B cell (primary cell): ENCODE measurements at regions of chr1 and their contacts with region 1.

Region 1: GRCh38 chr1:37989361-37989930 is 376 bp downstream of the SF3A3 start:
- DNase-seq: no peak
- ATAC-seq: no peak
- H3K4me3 ChIP-seq: peak overlapping the region; percentile 90 to 98 (median 96)
- H3K4me3 Mint-ChIP-seq: peak overlapping the region; percentile 99
- H3K27ac ChIP-seq: peak overlapping the region; percentile 53 to 85
- H3K27ac Mint-ChIP-seq: peak overlapping the region; percentile 98
- H3K4me1 ChIP-seq: peaks cover 7 to 15% of the 10 kb centered on the region in 2 donors
- H3K4me1 Mint-ChIP-seq: peaks cover 20% of the 10 kb centered on the region
- H3K27me3 ChIP-seq: no peaks in the 10 kb centered on the region
- H3K27me3 Mint-ChIP-seq: no peaks in the 10 kb centered on the region
- CTCF ChIP-seq: no peak

Region 2: GRCh38 chr1:37807555-37808368 is 181.7 kb before region 1 on chr1 and contains the starts of genes C1orf122 and YRDC:
- CTCF ChIA-PET with region 1: interaction called, 3 read pairs
- POLR2A ChIA-PET with region 1: no interaction called
- intact Hi-C with region 1: loop called (anchors 1 kb)
- DNase-seq: peak; percentile 91
- ATAC-seq: peak; percentile 90
- H3K4me3 ChIP-seq: peak within 1 kb of the TSS; percentile 78 to 88 (median 83)
- H3K4me3 Mint-ChIP-seq: peak within 1 kb of the TSS; percentile 98
- H3K27ac ChIP-seq: peak within 1 kb of the TSS; percentile 68 to 94
- H3K27ac Mint-ChIP-seq: peak within 1 kb of the TSS; percentile 98
- H3K4me1 ChIP-seq: peaks cover 14 to 31% of the 10 kb centered on the region in 2 donors
- H3K4me1 Mint-ChIP-seq: peaks cover 40% of the 10 kb centered on the region
- H3K27me3 ChIP-seq: no peaks in the 10 kb centered on the region
- H3K27me3 Mint-ChIP-seq: no peaks in the 10 kb centered on the region
- CTCF ChIP-seq: no peak
- total RNA-seq, gene C1orf122: 15.7 and 16.9 TPM in 2 replicates
- total RNA-seq, gene YRDC: 12.5 and 14.0 TPM in 2 replicates

Region 3: DNA sequence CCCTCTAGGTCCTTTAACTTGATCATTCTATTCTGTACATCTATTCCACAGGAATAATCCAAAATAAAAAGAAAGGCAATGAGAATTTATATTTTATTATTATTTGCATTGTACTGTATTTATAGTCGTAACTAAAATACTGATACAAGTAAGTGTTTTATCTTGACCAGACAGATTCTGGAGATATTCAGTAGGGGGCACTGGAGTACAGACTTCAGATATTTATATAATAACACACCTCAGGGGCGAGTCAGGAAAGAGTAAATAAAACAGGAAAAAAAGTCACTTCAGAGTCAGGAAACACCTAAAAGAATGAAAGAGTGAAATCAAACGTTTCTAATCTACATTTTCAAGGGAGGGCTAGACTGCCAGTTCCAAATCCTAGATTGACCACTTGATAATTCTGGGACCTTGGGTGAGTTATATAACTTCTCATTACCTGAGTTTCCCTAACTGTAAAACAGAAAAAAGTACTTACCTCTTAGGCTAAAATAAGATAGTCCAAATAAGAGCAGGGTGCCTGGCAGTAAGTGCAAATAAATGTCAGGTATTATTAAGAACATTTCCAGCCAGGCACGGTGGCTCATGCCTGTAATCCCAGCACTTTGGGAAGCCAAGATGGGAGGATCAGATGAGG is 99.0 kb before region 1 on chr1:
- CTCF ChIA-PET with region 1: interaction called, 4 read pairs
- POLR2A ChIA-PET with region 1: no interaction called
- intact Hi-C with region 1: loop called (anchors 1 kb)
- DNase-seq: peak; percentile 69
- ATAC-seq: peak; percentile 61
- H3K4me3 ChIP-seq: no peak overlapping the region
- H3K4me3 Mint-ChIP-seq: no peak overlapping the region
- H3K27ac ChIP-seq: peak overlapping the region in 1 of 2 donors; percentile 43
- H3K27ac Mint-ChIP-seq: peak overlapping the region; percentile 23
- H3K4me1 ChIP-seq: no peaks in the 10 kb centered on the region
- H3K4me1 Mint-ChIP-seq: peaks cover 2% of the 10 kb centered on the region
- H3K27me3 ChIP-seq: no peaks in the 10 kb centered on the region
- H3K27me3 Mint-ChIP-seq: no peaks in the 10 kb centered on the region
- CTCF ChIP-seq: peak; percentile 81

Region 4: DNA sequence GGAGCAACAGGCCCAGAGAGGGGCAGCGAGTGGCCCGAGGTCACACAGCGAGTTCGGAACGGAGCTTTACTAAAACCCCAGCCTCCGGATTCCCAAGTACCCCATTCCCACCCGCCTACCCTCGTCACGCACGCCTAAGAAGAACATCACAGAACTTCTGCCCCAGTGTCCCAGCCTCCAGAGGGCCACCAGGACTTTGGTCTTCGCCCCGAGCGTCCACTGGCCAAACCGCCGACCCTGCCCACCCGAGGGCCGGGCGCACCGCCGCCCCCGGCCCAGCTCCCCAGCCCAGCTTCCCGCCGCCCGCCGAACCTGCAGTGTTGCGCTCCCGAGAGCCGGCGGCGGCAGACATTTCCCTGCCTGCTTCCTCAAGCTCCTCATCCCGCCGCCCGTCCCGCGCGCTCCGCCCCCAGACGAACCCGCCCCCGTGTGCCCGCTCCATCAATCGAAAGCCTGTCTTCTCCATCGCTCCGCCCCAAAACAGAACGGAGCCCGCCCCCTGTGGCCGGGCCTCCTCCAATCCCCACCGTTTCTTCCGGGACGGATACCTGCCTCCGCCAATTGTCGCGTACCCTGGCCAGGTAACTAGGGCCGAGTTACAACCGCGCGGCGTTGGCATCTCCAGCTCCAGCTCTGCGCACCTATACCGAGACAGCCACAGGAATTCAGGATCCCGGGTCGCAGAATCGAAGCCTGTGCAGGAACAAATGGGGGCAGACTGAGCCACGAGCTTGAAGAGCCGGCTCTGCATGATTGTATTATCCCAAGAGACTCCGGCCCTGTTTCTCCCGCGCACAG is 57.9 kb before region 1 on chr1:
- CTCF ChIA-PET with region 1: no interaction called
- POLR2A ChIA-PET with region 1: interaction called, 5 read pairs
- intact Hi-C with region 1: loop called (anchors 1 kb)
- DNase-seq: peak; percentile 97
- ATAC-seq: peak; percentile 99
- H3K4me3 ChIP-seq: peak overlapping the region; percentile 69 to 98 (median 97)
- H3K4me3 Mint-ChIP-seq: peak overlapping the region; percentile 89
- H3K27ac ChIP-seq: peak overlapping the region in 1 of 2 donors; percentile 80
- H3K27ac Mint-ChIP-seq: peak overlapping the region; percentile 83
- H3K4me1 ChIP-seq: peaks cover 18 to 28% of the 10 kb centered on the region in 2 donors
- H3K4me1 Mint-ChIP-seq: peaks cover 42% of the 10 kb centered on the region
- H3K27me3 ChIP-seq: no peaks in the 10 kb centered on the region
- H3K27me3 Mint-ChIP-seq: no peaks in the 10 kb centered on the region
- CTCF ChIP-seq: no peak

Region 5: GRCh38 chr1:38012363-38013226 is 23.1 kb after region 1 on chr1 and contains the start of gene UTP11:
- CTCF ChIA-PET with region 1: interaction called, 26 read pairs
- POLR2A ChIA-PET with region 1: interaction called, 3 read pairs
- intact Hi-C with region 1: loop called (anchors 1 kb)
- DNase-seq: peak; percentile 95
- ATAC-seq: peak; percentile 97
- H3K4me3 ChIP-seq: peak within 1 kb of the TSS; percentile 72 to 93 (median 83)
- H3K4me3 Mint-ChIP-seq: peak within 1 kb of the TSS; percentile 97
- H3K27ac ChIP-seq: peak within 1 kb of the TSS; percentile 76 to 90
- H3K27ac Mint-ChIP-seq: peak within 1 kb of the TSS; percentile 91
- H3K4me1 ChIP-seq: peaks cover 13 to 20% of the 10 kb centered on the region in 2 donors
- H3K4me1 Mint-ChIP-seq: peaks cover 23% of the 10 kb centered on the region
- H3K27me3 ChIP-seq: no peaks in the 10 kb centered on the region
- H3K27me3 Mint-ChIP-seq: no peaks in the 10 kb centered on the region
- CTCF ChIP-seq: no peak
- total RNA-seq, gene UTP11: 16.4 and 16.8 TPM in 2 replicates

Region 6: GRCh38 chr1:38052750-38053410 is 63.4 kb after region 1 on chr1:
- CTCF ChIA-PET with region 1: no interaction called
- POLR2A ChIA-PET with region 1: no interaction called
- intact Hi-C with region 1: no loop called
- DNase-seq: peak; percentile 79
- ATAC-seq: peak; percentile 92
- H3K4me3 ChIP-seq: no peak overlapping the region
- H3K4me3 Mint-ChIP-seq: peak overlapping the region; percentile 14
- H3K27ac ChIP-seq: no peak overlapping the region
- H3K27ac Mint-ChIP-seq: no peak overlapping the region
- H3K4me1 ChIP-seq: peaks cover 13 to 20% of the 10 kb centered on the region in 2 donors
- H3K4me1 Mint-ChIP-seq: peaks cover 24% of the 10 kb centered on the region
- H3K27me3 ChIP-seq: peaks cover 0 to 2% (median 0%) of the 10 kb centered on the region in 4 experiments
- H3K27me3 Mint-ChIP-seq: no peaks in the 10 kb centered on the region
- CTCF ChIP-seq: no peak

Region 7: DNA sequence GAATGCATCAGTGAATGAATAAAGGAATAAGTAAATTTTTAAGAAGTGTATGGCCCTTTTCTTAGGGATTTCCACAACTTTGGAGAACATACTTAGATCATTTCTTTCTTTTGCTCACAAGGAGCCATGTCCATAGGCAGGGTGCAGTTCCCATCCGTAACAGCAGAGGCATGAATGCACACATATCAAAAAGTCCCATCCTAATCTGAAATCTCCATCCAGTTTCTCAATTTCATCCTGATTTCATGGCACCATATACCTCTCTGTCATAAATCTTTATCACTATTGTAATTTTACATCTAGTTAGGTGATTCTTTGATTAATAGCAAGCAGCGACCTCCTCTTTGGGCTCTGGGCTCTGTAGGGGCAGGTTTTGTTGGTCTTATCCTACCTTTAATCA is 510.9 kb after region 1 on chr1:
- CTCF ChIA-PET with region 1: interaction called, 16 read pairs
- POLR2A ChIA-PET with region 1: no interaction called
- intact Hi-C with region 1: no loop called
- DNase-seq: no peak
- ATAC-seq: no peak
- H3K4me3 ChIP-seq: no peak overlapping the region
- H3K4me3 Mint-ChIP-seq: no peak overlapping the region
- H3K27ac ChIP-seq: no peak overlapping the region
- H3K27ac Mint-ChIP-seq: no peak overlapping the region
- H3K4me1 ChIP-seq: peaks cover 8 to 12% of the 10 kb centered on the region in 2 donors
- H3K4me1 Mint-ChIP-seq: peaks cover 22% of the 10 kb centered on the region
- H3K27me3 ChIP-seq: peaks cover 0 to 11% (median 5%) of the 10 kb centered on the region in 4 experiments
- H3K27me3 Mint-ChIP-seq: peaks cover 13% of the 10 kb centered on the region
- CTCF ChIP-seq: peak; percentile 54